ENCODE measurements at regions of chr19 and their contacts with region 1.

Region 1: DNA sequence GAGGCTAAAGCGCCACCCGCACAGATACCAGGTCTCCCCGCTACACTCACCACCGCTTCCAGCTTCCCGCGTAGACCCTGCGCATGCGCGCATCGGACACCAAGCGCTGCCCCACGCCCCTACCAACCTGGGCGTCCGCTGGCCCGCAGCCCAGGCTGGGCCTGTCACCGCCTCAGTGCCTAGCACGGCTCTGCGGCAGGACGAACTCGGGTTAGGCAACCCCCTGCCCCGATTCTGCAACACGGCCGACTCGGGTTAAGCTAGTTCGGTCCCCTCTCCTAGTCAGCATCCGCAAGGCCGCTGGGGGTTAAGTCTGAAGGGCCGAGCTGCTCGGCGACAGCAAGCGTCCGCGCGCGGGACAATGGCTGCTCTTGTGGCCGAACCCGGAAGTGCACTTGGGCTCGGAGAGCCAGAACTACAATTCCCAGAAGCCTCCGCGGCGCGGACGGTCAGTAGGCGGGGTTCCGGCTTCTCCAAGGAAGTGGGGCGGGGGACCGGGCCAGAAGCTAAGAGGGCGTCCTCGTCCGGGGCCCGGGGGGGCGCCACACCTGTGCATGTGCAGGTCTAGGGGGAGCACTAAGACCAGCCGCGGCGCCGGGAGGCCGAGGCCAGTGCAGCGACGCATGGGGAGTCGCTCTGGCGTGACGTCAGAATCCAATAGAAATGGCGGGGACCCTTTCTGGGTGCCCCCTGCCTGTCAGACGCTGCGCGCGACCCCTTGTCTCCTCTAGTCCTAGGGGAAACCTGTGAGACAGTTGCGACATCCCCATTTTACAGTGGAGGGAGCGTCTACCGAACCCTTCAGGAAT is at the start of gene ZNF180:
- DNase-seq: peak; percentile 68
- H3K4me3 ChIP-seq: peak within 1 kb of the TSS; percentile 76
- H3K27me3 ChIP-seq: peaks cover 2% of the 10 kb centered on the region
- CTCF ChIP-seq: peak; percentile 45; the same call in 1 of the 2 replicates
- polyA plus RNA-seq, gene ZNF180: 0.80 and 1.2 TPM in 2 replicates

Region 2: GRCh38 chr19:44512326-44513298 is 12.3 kb after region 1 on chr19:
- CTCF ChIA-PET with region 1: interaction called, 22 read pairs
- POLR2A ChIA-PET with region 1: no interaction called
- DNase-seq: no peak
- H3K4me3 ChIP-seq: no peak overlapping the region
- H3K27me3 ChIP-seq: no peaks in the 10 kb centered on the region
- CTCF ChIP-seq: peak; percentile 61

Measured in BJ (cell line).